PC-3 (cell line): ENCODE measurements at regions of chr2 and their contacts with region 1.

Region 1: GRCh38 chr2:167264380-167264779 is 376.1 kb downstream of the XIRP2 start:
- DNase-seq: peak; percentile 71
- ATAC-seq: peak; percentile 95
- H3K4me3 ChIP-seq: no peak overlapping the region
- H3K27ac ChIP-seq: no peak overlapping the region
- H3K4me1 ChIP-seq: no peaks in the 10 kb centered on the region
- H3K27me3 ChIP-seq: no peaks in the 10 kb centered on the region
- CTCF ChIP-seq: peak; percentile 87

Region 2: DNA sequence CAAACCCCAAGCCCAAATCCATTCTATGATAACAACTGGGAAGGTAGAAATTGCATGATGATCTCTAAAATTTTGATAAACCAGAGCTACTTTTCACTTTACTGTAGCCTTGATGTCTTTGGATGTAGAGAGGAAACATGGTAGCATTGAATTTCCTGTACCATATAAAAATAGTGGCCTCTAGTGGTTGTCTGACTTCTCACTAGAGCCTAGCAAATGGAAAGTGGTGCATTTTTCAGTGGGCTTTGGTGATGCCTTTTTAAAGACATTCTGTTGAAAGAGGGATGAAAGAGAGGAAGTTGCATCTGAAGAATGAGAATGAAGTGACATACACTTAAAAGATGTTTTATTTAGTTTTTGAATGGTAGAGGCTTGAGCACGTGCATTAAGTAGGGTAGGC is 286.1 kb after region 1 on chr2:
- CTCF ChIA-PET with region 1: interaction called, 7 read pairs
- POLR2A ChIA-PET with region 1: no interaction called
- intact Hi-C with region 1: loop called (anchors 5 kb)
- DNase-seq: peak; percentile 59
- ATAC-seq: peak; percentile 58
- H3K4me3 ChIP-seq: no peak overlapping the region
- H3K27ac ChIP-seq: no peak overlapping the region
- H3K4me1 ChIP-seq: no peaks in the 10 kb centered on the region
- H3K27me3 ChIP-seq: no peaks in the 10 kb centered on the region
- CTCF ChIP-seq: peak; percentile 78

Region 3: DNA sequence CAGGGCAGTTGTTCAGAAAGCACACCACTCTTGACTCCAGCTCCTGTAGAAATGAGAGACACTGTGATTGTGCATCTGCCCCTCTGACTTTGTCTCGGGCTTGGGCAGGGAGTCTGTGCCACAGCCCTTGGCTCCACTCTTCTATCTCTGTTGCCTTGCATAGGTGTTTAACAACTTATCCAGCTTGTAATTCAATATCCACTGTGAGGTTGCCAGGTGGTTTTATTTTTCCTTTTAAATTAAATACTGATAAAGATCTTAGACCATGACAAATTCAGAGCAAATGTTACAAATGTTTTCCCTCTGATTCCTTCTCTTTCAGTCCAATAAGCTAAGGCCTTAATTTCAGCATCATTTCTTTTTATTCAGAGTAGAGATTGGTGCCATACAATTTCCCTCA is 561.3 kb after region 1 on chr2:
- CTCF ChIA-PET with region 1: interaction called, 11 read pairs
- POLR2A ChIA-PET with region 1: no interaction called
- intact Hi-C with region 1: no loop called
- DNase-seq: peak; percentile 59
- ATAC-seq: peak; percentile 87
- H3K4me3 ChIP-seq: no peak overlapping the region
- H3K27ac ChIP-seq: no peak overlapping the region
- H3K4me1 ChIP-seq: no peaks in the 10 kb centered on the region; the same call in 1 of the 2 replicates
- H3K27me3 ChIP-seq: no peaks in the 10 kb centered on the region
- CTCF ChIP-seq: no peak